Heart left ventricle (tissue), 16 donors: ENCODE measurements at regions of chr5 and their contacts with region 1.

Region 1: DNA sequence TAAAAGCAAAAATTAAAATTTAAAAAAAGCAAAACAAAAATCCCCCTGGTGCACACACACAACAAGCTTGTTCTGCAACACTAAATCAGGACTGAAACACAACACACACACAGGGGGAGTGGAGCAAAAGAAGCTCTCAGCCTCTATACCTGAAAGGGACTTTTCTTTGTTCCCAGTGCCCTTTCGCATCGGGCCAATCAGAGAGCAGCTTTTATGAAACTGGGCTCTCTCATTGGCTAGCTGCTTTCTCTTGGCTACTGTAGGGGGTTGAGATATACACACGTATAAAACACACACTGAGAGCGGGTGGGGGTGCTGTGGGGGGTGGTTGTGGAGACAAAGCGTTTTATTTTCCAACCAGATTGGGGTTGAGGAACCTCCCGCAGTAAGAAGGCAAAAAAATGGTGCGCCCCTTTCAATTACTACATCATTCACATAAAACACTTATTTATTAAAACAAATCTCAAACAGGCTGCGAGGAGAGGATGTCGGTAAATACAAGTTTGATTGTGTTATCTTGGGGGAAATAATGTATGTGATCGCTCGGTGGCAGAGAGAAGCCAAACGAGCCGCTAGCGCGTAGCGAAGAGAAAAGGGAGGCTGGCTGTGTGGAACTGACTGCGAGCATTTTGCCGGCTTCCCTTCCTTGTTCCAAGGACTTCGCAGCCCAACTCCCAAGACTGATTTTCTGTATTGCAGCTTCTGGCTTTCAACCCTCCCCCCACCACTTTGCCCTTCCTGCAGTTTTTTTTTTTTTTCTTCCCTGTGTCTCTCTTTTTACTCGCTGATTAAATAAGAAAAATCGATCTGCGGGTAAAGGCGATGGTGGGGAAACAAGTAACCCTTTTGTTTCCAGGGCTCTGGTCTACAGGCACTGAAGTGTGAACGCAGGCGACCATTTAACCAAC is 2.5 kb upstream of the ZNF608 start:
- DNase-seq: peak in 4 of 5 donors; percentile 74 to 82 (median 80)
- ATAC-seq: peak; percentile 88 to 94 (median 92)
- H3K4me3 ChIP-seq: peak overlapping the region; percentile 46 to 77 (median 68)
- H3K27ac ChIP-seq: peak overlapping the region; percentile 56 to 96 (median 91)
- H3K4me1 ChIP-seq: peaks cover 0 to 36% (median 6%) of the 10 kb centered on the region in 12 donors
- H3K27me3 ChIP-seq: peaks cover 0 to 21% (median 0%) of the 10 kb centered on the region in 9 donors
- CTCF ChIP-seq: no peak
- POLR2A ChIP-seq: peak in 1 of 2 donors; percentile 56

Region 2: GRCh38 chr5:124132843-124133242 is 616.1 kb before region 1 on chr5:
- intact Hi-C with region 1: loop called in 1 of 10 experiments (anchors 10 kb)
- DNase-seq: no peak
- ATAC-seq: no peak
- H3K4me3 ChIP-seq: no peak overlapping the region
- H3K27ac ChIP-seq: no peak overlapping the region
- H3K4me1 ChIP-seq: peaks cover 0 to 11% (median 0%) of the 10 kb centered on the region in 12 donors
- H3K27me3 ChIP-seq: no peaks in the 10 kb centered on the region
- CTCF ChIP-seq: no peak
- POLR2A ChIP-seq: no peak

Region 3: DNA sequence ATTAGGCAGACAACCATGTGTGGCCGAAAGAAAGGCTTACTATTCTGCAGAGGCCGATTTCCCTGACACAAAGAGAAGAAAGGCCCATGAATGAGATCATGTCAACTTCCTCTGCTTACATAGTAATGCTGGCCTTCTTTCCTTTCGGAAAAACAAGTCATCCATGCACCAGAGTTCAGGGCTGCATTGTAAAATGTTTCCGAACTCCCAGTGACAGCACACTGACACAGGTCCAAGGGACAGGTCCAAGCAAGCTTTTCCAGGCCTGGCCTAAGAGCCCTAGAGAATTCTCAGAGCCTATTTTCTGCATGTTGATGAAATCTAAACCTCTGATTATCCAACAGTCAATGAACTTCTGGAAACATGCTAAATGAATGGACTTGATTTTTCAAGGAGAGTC is 143.4 kb before region 1 on chr5:
- intact Hi-C with region 1: loop called in 2 of 10 experiments (anchors 5 kb)
- DNase-seq: peak in 3 of 5 donors; percentile 56 to 67 (median 62)
- ATAC-seq: peak; percentile 89 to 98 (median 89)
- H3K4me3 ChIP-seq: no peak overlapping the region
- H3K27ac ChIP-seq: peak overlapping the region in 10 of 12 donors; percentile 9 to 68 (median 57)
- H3K4me1 ChIP-seq: peaks cover 0 to 27% (median 20%) of the 10 kb centered on the region in 12 donors
- H3K27me3 ChIP-seq: no peaks in the 10 kb centered on the region
- CTCF ChIP-seq: no peak
- POLR2A ChIP-seq: no peak

Region 4: GRCh38 chr5:124706729-124707361 is 42.1 kb before region 1 on chr5:
- intact Hi-C with region 1: loop called in 5 of 10 experiments (anchors 5 kb)
- DNase-seq: peak in 4 of 5 donors; percentile 61 to 74 (median 66)
- ATAC-seq: peak; percentile 33 to 74 (median 70)
- H3K4me3 ChIP-seq: peak overlapping the region in 8 of 12 donors; percentile 2 to 26 (median 10)
- H3K27ac ChIP-seq: peak overlapping the region in 7 of 12 donors; percentile 11 to 53 (median 35)
- H3K4me1 ChIP-seq: peaks cover 6 to 78% (median 51%) of the 10 kb centered on the region in 12 donors
- H3K27me3 ChIP-seq: no peaks in the 10 kb centered on the region
- CTCF ChIP-seq: no peak
- POLR2A ChIP-seq: no peak

Region 5: DNA sequence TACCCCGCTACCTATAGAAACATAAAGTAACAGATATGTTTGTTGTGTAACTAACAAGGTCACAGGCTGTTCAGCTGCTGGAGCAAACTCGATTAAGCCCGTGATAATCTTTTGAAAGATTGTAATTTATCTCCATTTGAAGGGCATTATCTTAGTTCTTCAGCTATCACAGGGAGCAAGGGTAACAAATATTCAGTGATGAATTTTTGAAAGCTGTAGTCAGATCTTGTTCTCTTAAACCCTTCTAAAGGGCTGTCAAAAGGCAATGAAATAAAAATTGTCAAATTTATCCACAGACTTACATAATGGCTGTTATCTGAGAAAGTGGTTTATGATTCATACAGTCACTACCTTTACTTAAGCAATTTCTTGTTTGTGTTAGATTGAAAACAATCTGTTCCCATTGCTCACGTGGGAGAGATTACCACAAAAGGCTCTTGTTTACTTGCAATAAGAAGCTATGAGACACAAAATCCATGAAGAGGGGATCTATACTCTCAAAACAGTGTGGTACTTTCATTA is 75.8 kb after region 1 on chr5:
- intact Hi-C with region 1: no loop called
- DNase-seq: no peak
- ATAC-seq: peak in 2 of 4 donors; percentile 24 to 33
- H3K4me3 ChIP-seq: no peak overlapping the region
- H3K27ac ChIP-seq: no peak overlapping the region
- H3K4me1 ChIP-seq: peaks cover 0 to 5% (median 0%) of the 10 kb centered on the region in 12 donors
- H3K27me3 ChIP-seq: no peaks in the 10 kb centered on the region
- CTCF ChIP-seq: no peak
- POLR2A ChIP-seq: no peak

Region 6: DNA sequence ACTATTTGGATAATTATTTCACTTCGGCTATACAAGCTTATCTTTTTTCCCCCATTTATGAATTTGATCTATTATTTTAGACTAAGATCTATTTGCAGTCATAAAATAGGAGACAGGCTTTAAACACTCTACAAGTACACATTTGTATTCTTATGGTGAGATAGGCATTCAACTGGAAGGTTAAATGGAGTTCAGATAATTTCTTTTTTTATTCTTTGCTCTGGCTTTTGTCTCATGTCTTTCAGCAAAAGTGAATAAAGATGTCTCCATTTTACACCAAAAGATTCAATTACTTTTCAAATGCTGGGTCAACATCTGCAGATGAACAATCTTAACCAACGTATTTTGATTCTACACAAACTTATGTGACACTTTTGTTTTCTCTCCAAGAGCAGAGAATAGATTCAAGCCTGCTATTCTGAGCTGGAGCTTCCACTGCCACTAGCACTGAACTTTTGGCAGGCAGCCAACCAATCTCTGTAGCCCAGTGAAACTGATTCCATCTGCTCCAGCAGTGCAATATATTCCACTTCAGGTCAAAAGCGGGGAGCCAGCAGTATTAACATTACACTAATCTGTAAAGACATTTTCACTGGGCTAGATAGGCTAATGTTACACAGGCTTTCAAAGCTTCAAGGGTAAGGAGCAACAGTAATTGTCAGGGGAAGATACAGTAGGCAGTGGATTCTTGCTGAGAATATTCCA is 449.5 kb after region 1 on chr5:
- intact Hi-C with region 1: loop called in 1 of 10 experiments (anchors 5 kb)
- DNase-seq: peak; percentile 65 to 91 (median 86)
- ATAC-seq: peak in 3 of 4 donors; percentile 68 to 76 (median 69)
- H3K4me3 ChIP-seq: no peak overlapping the region
- H3K27ac ChIP-seq: peak overlapping the region in 9 of 12 donors; percentile 8 to 74 (median 28)
- H3K4me1 ChIP-seq: peaks cover 0 to 35% (median 4%) of the 10 kb centered on the region in 12 donors
- H3K27me3 ChIP-seq: no peaks in the 10 kb centered on the region
- CTCF ChIP-seq: no peak
- POLR2A ChIP-seq: no peak

Region 7: GRCh38 chr5:126519634-126520592 is 1771.0 kb after region 1 on chr5:
- intact Hi-C with region 1: loop called in 1 of 10 experiments (anchors 10 kb)
- DNase-seq: no peak
- ATAC-seq: peak; percentile 34 to 63 (median 47)
- H3K4me3 ChIP-seq: peak overlapping the region in 1 of 12 donors; percentile 5
- H3K27ac ChIP-seq: peak overlapping the region; percentile 9 to 83 (median 38)
- H3K4me1 ChIP-seq: peaks cover 0 to 28% (median 9%) of the 10 kb centered on the region in 12 donors
- H3K27me3 ChIP-seq: no peaks in the 10 kb centered on the region
- CTCF ChIP-seq: no peak
- POLR2A ChIP-seq: no peak